Heart right ventricle (tissue), 16 donors: ENCODE measurements at regions of chr22 and their contacts with region 1.

Region 1: DNA sequence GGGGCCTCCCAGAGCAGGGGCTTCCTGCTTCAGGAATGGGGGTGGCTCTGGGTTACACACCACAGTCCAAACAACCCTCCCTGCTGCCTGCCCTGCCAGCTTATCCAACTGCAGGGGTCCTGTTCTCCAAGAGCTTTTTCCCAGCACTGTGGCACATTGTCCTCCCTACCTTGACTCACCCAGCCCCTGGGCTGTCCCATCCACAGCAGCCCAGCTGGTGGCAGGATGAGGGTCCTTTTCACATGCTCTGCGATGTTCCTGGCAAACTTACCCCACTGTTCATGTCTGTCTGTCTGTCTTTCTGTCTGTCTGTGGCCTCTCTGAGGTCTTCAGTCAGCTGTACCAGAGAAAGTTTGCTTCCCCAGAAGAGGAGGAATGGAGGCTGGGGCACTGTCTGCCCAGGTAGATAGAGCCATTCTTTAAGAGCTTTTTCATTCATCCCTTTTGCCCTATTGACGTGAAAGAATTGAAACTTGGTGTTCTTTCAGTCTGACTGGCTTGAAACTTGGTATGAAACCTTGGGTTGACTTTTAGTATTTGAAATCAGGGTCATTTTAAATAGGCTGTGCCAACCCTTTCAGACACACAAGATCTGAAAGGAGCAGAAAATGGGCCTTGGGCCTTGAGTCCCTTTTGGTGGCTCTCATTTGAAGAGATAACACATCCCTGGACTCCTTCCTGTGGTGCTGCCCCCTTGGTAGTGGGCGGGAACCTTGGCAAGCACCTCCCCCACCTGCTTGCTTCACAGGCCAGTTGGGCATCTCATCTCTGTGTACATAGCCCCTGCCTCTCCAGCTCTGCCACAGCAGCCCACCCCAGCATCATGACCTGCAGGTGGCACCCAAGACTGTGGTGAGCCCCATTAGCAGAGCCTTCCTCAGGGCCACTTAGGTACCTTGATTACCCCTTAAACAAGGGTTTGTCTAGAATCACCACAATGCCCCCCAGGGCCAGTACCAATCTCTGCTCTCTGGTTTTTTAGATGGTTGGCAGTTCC is 74.6 kb upstream of the SUSD2 start:
- DNase-seq: peak in 1 of 2 donors; percentile 22
- ATAC-seq: peak in 7 of 8 donors; percentile 18 to 47 (median 39)
- H3K4me3 ChIP-seq: no peak overlapping the region
- H3K27ac ChIP-seq: peak overlapping the region in 7 of 10 donors; percentile 21 to 70 (median 53)
- H3K4me1 ChIP-seq: peaks cover 20 to 54% (median 34%) of the 10 kb centered on the region in 9 donors
- H3K27me3 ChIP-seq: no peaks in the 10 kb centered on the region
- CTCF ChIP-seq: peak in 6 of 9 donors; percentile 18 to 50 (median 36)

Region 2: GRCh38 chr22:24077416-24077815 is 29.3 kb before region 1 on chr22:
- intact Hi-C with region 1: loop called in 1 of 10 experiments (anchors 1 kb)
- DNase-seq: peak in 1 of 2 donors; percentile 51
- ATAC-seq: peak; percentile 91 to 98 (median 95)
- H3K4me3 ChIP-seq: no peak overlapping the region
- H3K27ac ChIP-seq: peak overlapping the region in 9 of 10 donors; percentile 26 to 81 (median 71)
- H3K4me1 ChIP-seq: peaks cover 0 to 20% (median 3%) of the 10 kb centered on the region in 9 donors
- H3K27me3 ChIP-seq: no peaks in the 10 kb centered on the region
- CTCF ChIP-seq: no peak

Region 3: DNA sequence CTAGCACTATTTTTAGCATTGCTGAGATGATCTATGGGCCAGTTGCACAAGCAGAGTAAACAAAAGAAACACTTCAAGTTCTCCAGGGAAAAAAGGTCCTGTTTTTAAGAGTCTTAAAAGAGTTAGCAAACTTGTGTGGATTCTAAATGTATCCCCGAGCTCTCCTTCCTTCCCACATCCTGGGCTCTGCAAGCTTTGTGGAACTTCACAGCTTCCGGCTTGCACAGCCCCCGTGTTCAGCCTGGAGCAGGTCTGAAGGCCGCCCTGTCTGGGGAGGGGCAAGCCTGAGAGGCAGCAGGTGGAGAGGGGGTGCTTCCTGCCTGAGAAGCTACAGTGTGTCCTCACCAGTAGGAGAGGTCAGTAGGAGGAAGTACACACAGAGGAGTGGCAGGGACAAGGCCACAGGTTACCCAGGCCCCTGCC is 39.5 kb after region 1 on chr22:
- intact Hi-C with region 1: no loop called
- DNase-seq: peak in 1 of 2 donors; percentile 38
- ATAC-seq: peak; percentile 28 to 58 (median 50)
- H3K4me3 ChIP-seq: peak overlapping the region in 1 of 10 donors; percentile 0
- H3K27ac ChIP-seq: peak overlapping the region; percentile 62 to 94 (median 80)
- H3K4me1 ChIP-seq: peaks cover 40 to 76% (median 64%) of the 10 kb centered on the region in 9 donors
- H3K27me3 ChIP-seq: no peaks in the 10 kb centered on the region
- CTCF ChIP-seq: no peak

Region 4: DNA sequence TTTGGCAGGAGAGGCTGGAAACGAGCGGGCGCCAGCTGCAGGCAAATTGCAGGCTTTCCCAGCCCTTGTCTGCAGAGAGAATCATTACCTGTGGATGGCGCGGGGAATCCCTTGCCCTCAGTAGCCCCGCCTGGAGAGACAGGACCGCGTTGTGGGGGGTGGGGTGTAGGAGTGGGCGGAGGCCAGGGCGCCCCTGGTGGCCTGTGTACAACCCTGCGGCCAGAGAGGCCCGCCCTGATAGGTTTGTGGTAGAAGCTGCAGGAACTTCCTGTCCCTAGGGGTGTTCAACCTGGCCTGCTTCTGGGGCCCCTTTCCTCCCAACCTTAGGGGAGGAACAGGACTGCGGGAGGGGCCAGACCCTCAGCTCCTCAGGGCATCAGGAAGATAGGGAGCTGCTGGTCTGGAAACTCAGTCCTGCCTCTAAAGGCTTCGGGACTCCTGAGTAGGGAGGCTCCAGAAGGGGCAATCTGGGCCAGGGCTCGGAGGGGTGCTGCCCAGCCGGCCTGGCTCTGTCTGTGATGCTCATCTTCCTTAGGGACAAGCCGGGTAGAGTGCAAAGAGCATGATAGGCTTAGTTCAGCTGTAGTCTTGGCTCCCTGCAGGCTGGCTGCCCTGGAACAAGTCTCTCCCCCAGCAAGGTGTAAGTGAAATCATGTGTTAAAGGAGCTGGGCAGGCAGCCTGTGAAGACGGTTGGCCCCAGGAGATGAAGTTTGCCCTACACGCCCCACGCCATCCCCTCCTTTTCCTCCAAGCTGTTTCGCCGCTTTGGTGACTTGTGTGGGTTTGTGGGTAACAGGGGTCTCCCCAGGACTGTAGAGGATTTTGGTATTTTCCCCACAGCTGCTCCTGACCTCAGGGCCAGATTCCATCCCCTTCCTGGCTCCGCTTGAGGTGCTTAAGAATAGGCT is 50.5 kb after region 1 on chr22:
- intact Hi-C with region 1: loop called in 5 of 10 experiments (anchors 5 to 10 kb)
- DNase-seq: peak; percentile 83 to 84
- ATAC-seq: peak; percentile 77 to 89 (median 86)
- H3K4me3 ChIP-seq: peak overlapping the region; percentile 57 to 90 (median 81)
- H3K27ac ChIP-seq: peak overlapping the region in 9 of 10 donors; percentile 76 to 93 (median 90)
- H3K4me1 ChIP-seq: peaks cover 30 to 75% (median 57%) of the 10 kb centered on the region in 9 donors
- H3K27me3 ChIP-seq: no peaks in the 10 kb centered on the region
- CTCF ChIP-seq: peak; percentile 74 to 93 (median 84)

Region 5: DNA sequence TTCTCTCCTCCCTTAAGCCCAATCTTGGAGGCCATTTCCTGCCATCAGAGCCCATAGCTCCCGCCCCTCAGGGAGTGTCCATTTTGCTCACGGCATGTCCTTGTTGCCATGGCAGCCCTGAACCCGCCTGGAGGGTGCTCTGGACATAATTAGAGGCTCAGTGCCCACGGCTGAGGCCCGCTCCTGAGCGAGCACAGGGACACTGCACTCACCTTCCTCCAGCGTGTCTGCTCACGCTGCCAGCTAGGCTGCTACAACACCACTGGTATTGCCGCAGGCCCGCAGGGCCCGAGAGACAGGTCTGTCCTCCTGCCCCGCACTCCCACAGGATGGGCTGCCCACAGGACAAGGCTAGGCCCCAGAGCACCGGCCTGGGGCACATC is 63.6 kb after region 1 on chr22:
- intact Hi-C with region 1: loop called in 7 of 10 experiments (anchors 1 to 10 kb)
- DNase-seq: no peak
- ATAC-seq: no peak
- H3K4me3 ChIP-seq: no peak overlapping the region
- H3K27ac ChIP-seq: no peak overlapping the region
- H3K4me1 ChIP-seq: peaks cover 6 to 29% (median 13%) of the 10 kb centered on the region in 9 donors
- H3K27me3 ChIP-seq: no peaks in the 10 kb centered on the region
- CTCF ChIP-seq: no peak

Region 6: GRCh38 chr22:24175160-24175808 is 68.6 kb after region 1 on chr22:
- intact Hi-C with region 1: loop called in 7 of 10 experiments (anchors 1 to 10 kb)
- DNase-seq: peak; percentile 85 to 88
- ATAC-seq: peak; percentile 56 to 86 (median 76)
- H3K4me3 ChIP-seq: no peak overlapping the region
- H3K27ac ChIP-seq: peak overlapping the region in 9 of 10 donors; percentile 41 to 84 (median 74)
- H3K4me1 ChIP-seq: peaks cover 8 to 57% (median 24%) of the 10 kb centered on the region in 9 donors
- H3K27me3 ChIP-seq: no peaks in the 10 kb centered on the region
- CTCF ChIP-seq: peak; percentile 74 to 93 (median 90)

Region 7: DNA sequence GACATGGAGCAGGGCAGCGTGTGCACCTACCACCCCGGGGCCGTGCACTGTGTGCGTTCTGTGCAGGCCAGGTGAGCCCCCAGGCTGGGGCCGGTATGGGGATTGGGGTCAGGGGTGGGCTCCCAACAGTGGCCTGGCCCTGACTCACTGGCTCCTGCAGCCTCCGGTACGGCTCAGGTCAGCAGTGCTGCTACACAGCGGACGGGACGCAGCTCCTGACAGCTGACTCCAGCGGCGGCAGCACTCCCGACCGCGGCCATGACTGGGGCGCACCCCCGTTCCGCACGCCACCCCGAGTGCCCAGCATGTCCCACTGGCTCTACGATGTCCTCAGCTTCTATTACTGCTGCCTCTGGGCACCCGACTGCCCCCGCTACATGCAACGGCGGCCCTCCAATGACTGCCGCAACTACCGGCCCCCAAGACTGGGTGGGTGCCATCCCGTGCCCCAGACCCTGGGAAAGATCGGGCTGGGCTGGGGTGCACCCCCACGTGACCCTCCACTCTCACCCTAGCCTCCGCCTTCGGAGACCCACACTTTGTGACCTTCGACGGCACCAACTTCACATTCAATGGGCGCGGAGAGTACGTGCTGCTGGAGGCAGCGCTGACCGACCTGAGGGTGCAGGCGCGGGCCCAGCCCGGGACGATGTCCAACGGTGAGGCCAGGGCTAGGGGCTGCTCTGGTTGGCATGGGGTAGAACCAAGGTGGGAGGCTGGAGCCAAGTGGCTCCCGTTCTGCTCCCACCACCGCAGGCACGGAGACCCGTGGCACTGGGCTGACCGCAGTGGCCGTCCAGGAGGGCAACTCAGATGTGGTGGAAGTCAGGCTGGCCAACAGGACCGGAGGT is 79.0 kb after region 1 on chr22:
- intact Hi-C with region 1: no loop called
- DNase-seq: no peak
- ATAC-seq: no peak
- H3K4me3 ChIP-seq: no peak overlapping the region
- H3K27ac ChIP-seq: no peak overlapping the region
- H3K4me1 ChIP-seq: peaks cover 7 to 38% (median 26%) of the 10 kb centered on the region in 9 donors
- H3K27me3 ChIP-seq: no peaks in the 10 kb centered on the region
- CTCF ChIP-seq: no peak